ENCODE measurements at regions of chr19 and their contacts with region 1.

Region 1: GRCh38 chr19:17766543-17767131 is 15.4 kb downstream of the FCHO1 start:
- DNase-seq: no peak
- H3K4me3 ChIP-seq: peak overlapping the region; percentile 20 to 44 (median 28)
- H3K27ac ChIP-seq: no peak overlapping the region
- H3K4me1 ChIP-seq: peaks cover 6 to 10% (median 9%) of the 10 kb centered on the region in 4 donors
- H3K27me3 ChIP-seq: peaks cover 0 to 10% (median 0%) of the 10 kb centered on the region in 4 donors
- CTCF ChIP-seq: peak; percentile 71 to 86 (median 73)
- EP300 ChIP-seq: no peak
- POLR2A ChIP-seq: no peak

Region 2: GRCh38 chr19:17610384-17610783 is 156.3 kb before region 1 on chr19:
- intact Hi-C with region 1: loop called (anchors 5 kb)
- DNase-seq: no peak
- H3K4me3 ChIP-seq: no peak overlapping the region
- H3K27ac ChIP-seq: no peak overlapping the region
- H3K4me1 ChIP-seq: peaks cover 11 to 16% (median 15%) of the 10 kb centered on the region in 4 donors
- H3K27me3 ChIP-seq: peaks cover 0 to 76% (median 13%) of the 10 kb centered on the region in 4 donors
- CTCF ChIP-seq: no peak
- EP300 ChIP-seq: no peak
- POLR2A ChIP-seq: no peak

Region 3: GRCh38 chr19:17703824-17704463 is 62.7 kb before region 1 on chr19:
- intact Hi-C with region 1: loop called (anchors 5 kb)
- DNase-seq: no peak
- H3K4me3 ChIP-seq: no peak overlapping the region
- H3K27ac ChIP-seq: no peak overlapping the region
- H3K4me1 ChIP-seq: no peaks in the 10 kb centered on the region
- H3K27me3 ChIP-seq: peaks cover 0 to 79% (median 0%) of the 10 kb centered on the region in 4 donors
- CTCF ChIP-seq: peak; percentile 78 to 87 (median 79)
- EP300 ChIP-seq: no peak
- POLR2A ChIP-seq: no peak

Region 4: GRCh38 chr19:17841810-17842662 is 75.4 kb after region 1 on chr19:
- intact Hi-C with region 1: no loop called
- DNase-seq: no peak
- H3K4me3 ChIP-seq: peak overlapping the region; percentile 28 to 53 (median 35)
- H3K27ac ChIP-seq: peak overlapping the region in 2 of 4 donors; percentile 13 to 43
- H3K4me1 ChIP-seq: peaks cover 0 to 28% (median 19%) of the 10 kb centered on the region in 4 donors
- H3K27me3 ChIP-seq: peaks cover 0 to 87% (median 13%) of the 10 kb centered on the region in 4 donors
- CTCF ChIP-seq: no peak
- EP300 ChIP-seq: no peak
- POLR2A ChIP-seq: no peak